ENCODE measurements at regions of chr12 and their contacts with region 1.

Region 1: DNA sequence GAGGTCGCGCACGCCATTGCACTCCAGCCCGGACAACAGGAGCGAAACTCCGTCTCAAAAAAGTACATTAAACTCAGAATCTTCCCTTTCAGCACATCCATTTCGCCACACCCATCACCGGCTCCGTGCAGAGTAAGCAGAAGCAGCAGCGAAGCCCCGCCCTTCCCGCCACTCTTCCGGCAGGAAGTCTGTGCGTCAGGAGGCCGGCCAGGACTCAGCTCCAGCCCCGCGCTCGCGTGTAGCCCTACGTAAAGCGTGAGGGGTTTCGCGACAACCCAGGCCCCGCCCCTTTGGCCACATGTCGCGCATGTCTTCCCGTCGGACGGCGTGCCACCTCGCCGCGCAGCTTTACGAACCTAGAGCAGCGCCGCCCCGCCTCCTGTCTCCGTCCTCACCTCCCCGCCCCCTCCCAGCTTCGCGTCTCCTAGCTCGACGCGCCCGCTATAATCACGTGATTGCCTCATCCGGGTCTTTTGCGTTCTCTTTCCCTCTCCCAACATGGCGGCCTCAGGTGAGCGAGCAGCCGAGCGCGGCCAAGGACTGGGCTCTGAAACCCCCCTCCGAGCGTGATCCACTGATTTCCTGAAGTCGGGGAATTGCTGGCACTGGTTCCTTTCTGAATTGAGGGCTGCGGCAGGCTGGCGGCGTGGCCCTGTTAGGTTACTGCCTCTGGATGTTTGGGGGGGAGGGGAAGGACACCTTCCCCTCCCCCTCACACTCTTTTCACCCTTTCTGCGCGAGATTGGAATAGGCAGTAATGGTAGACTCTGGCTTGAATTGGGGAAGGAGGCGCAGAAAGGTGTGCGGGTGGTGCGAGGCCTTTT is at the start of gene EIF4B:
- DNase-seq: peak; percentile 99 to 100 (median 99)
- H3K4me3 ChIP-seq: peak within 1 kb of the TSS; percentile 53 to 98 (median 87)
- H3K27ac ChIP-seq: peak within 1 kb of the TSS; percentile 77 to 98 (median 95)
- H3K27me3 ChIP-seq: no peaks in the 10 kb centered on the region
- CTCF ChIP-seq: peak in 30 of 56 donors; percentile 2 to 61 (median 38)
- total RNA-seq, gene EIF4B: 207 to 375 (median 283) TPM

Region 2: GRCh38 chr12:52041695-52042123 is 964.5 kb before region 1 on chr12:
- intact Hi-C with region 1: loop called in 1 of 2 experiments (anchors 10 kb)
- DNase-seq: no peak
- H3K4me3 ChIP-seq: no peak overlapping the region
- H3K27ac ChIP-seq: peak overlapping the region in 42 of 59 donors; percentile 6 to 93 (median 70)
- H3K27me3 ChIP-seq: no peaks in the 10 kb centered on the region
- CTCF ChIP-seq: no peak

Region 3: DNA sequence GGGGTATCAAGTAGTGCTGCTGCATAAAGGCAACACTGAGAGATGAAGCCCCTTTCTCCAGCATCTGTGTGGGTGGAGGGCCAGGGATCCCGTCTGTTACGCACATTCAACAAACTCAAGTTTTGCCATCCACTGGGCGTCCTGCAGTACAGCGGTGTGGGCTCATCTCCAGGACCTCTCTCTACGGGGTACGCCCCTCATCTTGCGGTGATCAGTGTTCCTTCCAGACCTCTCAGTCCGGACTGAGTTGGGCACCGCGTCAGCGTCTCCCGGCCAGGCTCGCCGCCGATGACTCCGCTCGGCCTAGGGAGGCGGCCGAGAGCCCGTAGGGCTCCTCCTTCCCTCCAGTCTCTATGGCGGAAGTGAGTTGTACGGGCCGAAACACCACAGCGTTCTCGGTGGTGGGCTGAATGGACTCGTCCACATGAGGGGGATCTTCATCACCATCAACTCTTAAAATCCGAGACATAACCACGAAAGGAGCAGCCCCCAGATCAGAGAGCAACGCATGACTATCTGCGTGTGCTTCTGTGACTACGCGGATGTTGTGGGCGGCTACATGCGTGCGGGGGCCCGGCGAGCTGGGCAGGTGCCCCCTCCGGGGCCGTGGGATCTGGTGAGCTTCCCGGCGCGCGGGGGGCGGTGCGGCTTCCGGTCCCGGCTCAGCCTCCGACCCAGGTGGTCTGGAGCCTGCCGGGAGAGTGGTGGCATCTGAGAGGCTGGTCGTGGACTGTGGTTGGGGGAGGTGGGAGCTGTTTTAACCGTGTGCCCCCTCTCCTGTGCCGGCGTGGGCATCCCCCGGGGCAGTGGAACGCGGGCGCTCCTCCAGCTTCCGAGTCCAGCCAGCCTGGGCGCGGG is 936.6 kb before region 1 on chr12 and contains the start of gene ATG101:
- intact Hi-C with region 1: loop called in 1 of 2 experiments (anchors 10 kb)
- DNase-seq: peak; percentile 77 to 93 (median 89)
- H3K4me3 ChIP-seq: peak within 1 kb of the TSS; percentile 67 to 100 (median 93)
- H3K27ac ChIP-seq: peak within 1 kb of the TSS; percentile 72 to 99 (median 95)
- H3K27me3 ChIP-seq: no peaks in the 10 kb centered on the region
- CTCF ChIP-seq: peak; percentile 46 to 94 (median 84)
- total RNA-seq, gene ATG101: 19.6 to 42.5 (median 31.5) TPM

Region 4: DNA sequence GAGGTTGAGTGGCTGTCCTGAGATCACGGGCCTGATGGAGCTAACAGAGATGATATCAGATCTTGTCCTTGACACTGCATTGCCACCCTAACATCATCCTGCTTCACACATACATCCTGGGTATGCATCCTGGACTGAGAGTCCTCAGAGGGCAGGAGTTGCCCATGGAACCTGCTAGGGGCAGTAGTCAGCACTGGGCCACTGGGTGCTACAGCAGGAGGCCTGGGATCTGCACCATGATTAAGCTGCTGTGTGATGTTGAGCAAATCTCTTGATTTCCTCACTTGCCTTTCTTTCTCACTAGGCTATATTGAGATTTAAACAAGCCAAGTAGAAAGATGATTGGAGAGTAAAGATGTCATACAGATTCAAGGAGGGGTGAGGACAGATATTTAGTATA is 22.1 kb before region 1 on chr12:
- intact Hi-C with region 1: no loop called
- DNase-seq: no peak
- H3K4me3 ChIP-seq: no peak overlapping the region
- H3K27ac ChIP-seq: no peak overlapping the region
- H3K27me3 ChIP-seq: peaks cover 0 to 4% (median 0%) of the 10 kb centered on the region in 45 donors
- CTCF ChIP-seq: no peak

Region 5: DNA sequence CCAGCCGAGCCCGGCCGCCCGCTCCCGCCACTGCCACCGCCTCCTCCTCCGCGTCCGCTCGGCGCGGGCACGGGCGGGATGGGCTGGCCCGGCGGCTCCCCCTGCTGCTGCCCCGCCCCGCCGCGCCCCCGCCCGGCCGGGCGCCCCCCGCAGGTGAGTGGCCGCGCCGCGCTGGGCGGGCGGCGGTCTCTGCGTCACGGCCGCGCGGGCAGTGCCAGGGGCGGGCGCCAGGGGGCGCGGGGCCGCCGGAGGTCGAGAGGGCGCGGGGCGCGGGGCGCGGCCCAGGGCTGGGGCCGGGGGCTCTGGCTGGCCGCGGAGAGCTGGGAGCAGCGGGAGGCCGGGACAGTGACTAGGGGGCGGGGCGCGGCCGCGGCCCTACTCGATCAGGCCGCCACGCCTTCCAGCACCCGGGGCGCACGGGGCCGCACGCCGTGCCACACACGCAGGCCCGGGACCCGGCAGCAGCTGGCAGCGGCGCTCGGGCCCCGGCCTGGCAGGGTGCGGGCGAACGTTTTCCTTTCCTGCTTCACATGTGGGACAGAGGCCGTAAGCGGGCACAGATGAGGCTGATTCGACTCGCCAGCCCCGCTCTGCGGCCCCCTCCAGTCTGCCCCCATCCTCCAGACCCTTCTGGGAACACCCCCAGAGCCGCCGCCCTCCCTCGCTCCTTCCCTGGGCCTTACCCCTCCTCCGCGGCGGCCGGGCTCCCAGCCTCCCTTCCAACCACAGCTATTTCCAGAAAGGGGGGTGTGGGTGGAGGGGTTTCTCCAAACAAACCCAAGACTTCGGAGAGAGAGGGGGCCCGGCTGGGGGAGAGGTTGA is 41.2 kb after region 1 on chr12:
- intact Hi-C with region 1: loop called (anchors 2 kb)
- DNase-seq: peak in 9 of 10 donors; percentile 43 to 79 (median 58)
- H3K4me3 ChIP-seq: peak overlapping the region; percentile 33 to 91 (median 73)
- H3K27ac ChIP-seq: peak overlapping the region; percentile 92 to 100 (median 99)
- H3K27me3 ChIP-seq: no peaks in the 10 kb centered on the region
- CTCF ChIP-seq: peak in 14 of 56 donors; percentile 1 to 40 (median 17)

Region 6: DNA sequence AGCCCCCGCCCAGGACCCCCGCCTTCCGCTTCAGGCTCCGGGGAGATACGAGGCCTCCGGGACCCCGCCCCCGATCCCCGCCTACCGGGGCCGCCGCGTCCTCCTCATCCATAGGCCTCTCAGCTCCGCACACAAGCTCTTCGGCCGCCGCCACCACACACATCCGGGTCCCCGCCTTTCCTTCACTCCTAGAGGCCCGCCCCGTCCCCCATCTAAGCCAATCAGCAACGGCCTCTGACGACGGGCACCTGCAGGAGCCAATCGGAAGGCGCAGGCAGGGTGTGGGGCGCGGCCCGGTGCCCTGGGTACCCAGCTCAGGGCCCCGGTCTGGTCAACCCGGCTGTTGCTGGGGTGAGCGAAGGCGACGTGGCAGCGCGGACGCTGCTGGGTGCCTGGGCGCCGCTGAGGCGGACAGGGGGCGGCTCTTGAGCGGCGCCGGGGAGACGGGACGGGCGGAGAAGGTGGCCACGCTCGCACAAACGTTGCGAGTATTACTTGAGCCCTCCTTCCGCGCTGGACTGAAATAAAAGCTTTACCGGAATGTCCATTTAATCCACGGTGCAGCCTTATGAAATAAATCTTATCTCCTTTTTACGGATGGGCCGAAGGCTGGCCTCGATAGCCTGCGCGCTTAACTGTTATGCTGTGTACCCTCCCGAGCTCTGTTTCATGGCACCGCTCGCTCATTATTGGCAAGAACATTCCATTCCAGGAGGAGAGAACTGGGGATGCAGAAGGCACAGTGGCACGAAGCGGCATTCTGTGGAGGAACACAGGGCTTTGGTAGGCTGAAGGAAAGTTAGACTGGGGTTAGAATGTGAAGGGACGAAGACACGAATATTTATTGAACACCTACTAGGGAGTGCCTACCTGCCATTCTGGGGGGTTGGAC is 73.3 kb after region 1 on chr12 and contains the start of gene SPRYD3:
- intact Hi-C with region 1: loop called in 1 of 2 experiments (anchors 2 kb)
- DNase-seq: peak; percentile 96 to 100 (median 98)
- H3K4me3 ChIP-seq: peak within 1 kb of the TSS; percentile 53 to 98 (median 89)
- H3K27ac ChIP-seq: peak within 1 kb of the TSS; percentile 35 to 98 (median 92)
- H3K27me3 ChIP-seq: no peaks in the 10 kb centered on the region
- CTCF ChIP-seq: peak in 25 of 56 donors; percentile 4 to 59 (median 26)
- total RNA-seq, gene SPRYD3: 74.6 to 263 (median 181) TPM

Region 7: DNA sequence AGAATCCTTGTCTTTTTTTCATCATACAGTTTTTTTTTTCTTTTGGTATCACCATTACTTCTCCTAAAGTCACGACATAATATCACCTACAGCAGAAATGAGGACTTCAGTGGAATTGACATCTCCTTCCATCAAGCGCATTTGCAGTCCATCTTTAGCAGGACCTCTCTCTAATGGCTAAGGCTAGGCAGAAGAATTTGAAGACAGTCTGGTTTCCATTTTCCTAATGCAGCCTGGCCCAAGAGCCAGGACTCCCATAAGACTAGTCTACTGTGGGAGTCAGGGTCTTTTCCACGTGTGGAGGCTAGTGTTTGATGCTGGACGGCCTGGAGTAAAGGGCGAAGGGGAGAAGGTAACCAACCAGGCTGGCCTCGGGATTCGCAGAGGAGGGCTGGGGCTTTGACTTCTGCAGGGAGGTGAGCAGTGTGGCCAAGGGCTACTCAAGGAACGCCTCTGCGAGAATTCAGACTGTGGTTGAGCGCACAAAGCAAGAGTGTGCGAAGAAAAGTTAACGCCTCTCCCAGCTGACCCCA is 173.6 kb after region 1 on chr12:
- intact Hi-C with region 1: no loop called
- DNase-seq: peak in 3 of 10 donors; percentile 27 to 62 (median 30)
- H3K4me3 ChIP-seq: peak overlapping the region; percentile 52 to 91 (median 79)
- H3K27ac ChIP-seq: peak overlapping the region; percentile 78 to 98 (median 95)
- H3K27me3 ChIP-seq: no peaks in the 10 kb centered on the region
- CTCF ChIP-seq: no peak

Region 8: DNA sequence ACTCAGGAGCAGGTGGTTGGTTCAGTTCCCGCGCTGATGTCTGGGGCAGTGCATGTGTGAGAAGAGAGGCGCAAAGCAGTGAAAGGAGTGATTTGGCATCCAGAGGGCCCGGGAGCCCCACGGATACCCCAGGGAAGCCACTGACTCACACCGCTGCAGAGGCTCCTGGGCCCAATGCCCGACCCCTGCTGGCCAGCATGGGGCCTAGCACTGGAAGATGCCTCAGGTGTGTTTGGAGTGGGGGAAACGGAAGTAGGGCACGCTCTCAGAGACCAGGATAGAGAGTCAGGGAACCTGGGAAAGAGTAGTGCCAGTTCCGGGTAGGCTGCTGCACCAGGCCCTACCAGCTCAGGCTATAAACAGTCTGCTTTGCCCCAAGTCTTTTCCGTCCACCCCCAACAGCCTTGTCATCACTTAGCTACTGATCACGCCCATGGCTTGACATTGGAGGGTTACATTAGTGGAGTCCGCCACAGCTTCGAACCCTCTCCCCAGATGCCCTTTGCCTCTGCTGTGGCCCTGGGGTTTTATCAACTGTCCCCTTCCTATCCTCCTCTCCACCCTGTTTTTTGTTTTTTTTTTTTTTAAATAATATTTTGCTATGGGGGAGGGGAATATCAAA is 184.0 kb after region 1 on chr12:
- intact Hi-C with region 1: no loop called
- DNase-seq: peak in 3 of 10 donors; percentile 14 to 28 (median 20)
- H3K4me3 ChIP-seq: no peak overlapping the region
- H3K27ac ChIP-seq: peak overlapping the region in 11 of 59 donors; percentile 16 to 51 (median 29)
- H3K27me3 ChIP-seq: no peaks in the 10 kb centered on the region
- CTCF ChIP-seq: peak in 55 of 56 donors; percentile 19 to 68 (median 54)